ENCODE measurements at regions of chr13 and their contacts with region 1.

Region 1: DNA sequence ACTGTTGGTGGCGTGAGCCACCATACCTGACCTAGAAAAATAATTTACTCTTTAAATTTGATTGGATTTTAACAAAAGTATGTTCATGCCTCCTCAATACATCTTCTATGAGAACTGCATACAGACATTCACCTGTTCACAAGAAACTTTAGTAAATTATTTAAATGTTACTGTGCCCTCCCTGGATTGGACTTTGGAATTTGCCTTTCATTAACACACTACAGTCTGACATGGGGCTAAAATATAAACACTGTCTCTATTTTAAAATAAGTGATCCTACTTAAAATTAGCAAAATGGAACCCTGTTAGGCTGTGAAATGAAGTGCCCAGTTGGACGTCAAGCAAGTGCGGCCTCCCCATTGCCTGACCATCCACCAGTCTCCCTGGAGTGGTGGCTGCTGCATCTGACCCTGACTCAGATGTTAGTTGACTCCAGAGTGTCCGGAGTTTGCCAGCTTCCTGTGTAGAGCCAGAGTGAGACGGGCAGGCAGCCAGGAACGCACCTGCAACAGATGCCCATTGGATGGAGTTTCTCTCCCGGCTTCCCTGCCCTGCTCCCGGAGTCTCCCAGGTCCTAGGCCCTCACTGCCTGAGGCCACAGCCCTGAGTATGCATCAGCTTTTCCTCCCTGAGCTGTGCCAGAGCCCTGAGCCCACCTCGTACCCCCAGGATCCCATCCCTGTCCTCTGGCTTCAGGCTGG is 45.9 kb upstream of the ATP11A start:
- DNase-seq: no peak
- H3K4me3 ChIP-seq: no peak overlapping the region
- H3K27ac ChIP-seq: no peak overlapping the region
- H3K4me1 ChIP-seq: no peaks in the 10 kb centered on the region
- H3K27me3 ChIP-seq: no peaks in the 10 kb centered on the region
- CTCF ChIP-seq: no peak
- EP300 ChIP-seq: no peak
- POLR2A ChIP-seq: no peak

Region 2: GRCh38 chr13:112616586-112617362 is 27.1 kb before region 1 on chr13:
- intact Hi-C with region 1: no loop called
- DNase-seq: no peak
- H3K4me3 ChIP-seq: no peak overlapping the region
- H3K27ac ChIP-seq: no peak overlapping the region
- H3K4me1 ChIP-seq: peaks cover 2% of the 10 kb centered on the region
- H3K27me3 ChIP-seq: no peaks in the 10 kb centered on the region
- CTCF ChIP-seq: no peak
- EP300 ChIP-seq: no peak
- POLR2A ChIP-seq: no peak

Region 3: DNA sequence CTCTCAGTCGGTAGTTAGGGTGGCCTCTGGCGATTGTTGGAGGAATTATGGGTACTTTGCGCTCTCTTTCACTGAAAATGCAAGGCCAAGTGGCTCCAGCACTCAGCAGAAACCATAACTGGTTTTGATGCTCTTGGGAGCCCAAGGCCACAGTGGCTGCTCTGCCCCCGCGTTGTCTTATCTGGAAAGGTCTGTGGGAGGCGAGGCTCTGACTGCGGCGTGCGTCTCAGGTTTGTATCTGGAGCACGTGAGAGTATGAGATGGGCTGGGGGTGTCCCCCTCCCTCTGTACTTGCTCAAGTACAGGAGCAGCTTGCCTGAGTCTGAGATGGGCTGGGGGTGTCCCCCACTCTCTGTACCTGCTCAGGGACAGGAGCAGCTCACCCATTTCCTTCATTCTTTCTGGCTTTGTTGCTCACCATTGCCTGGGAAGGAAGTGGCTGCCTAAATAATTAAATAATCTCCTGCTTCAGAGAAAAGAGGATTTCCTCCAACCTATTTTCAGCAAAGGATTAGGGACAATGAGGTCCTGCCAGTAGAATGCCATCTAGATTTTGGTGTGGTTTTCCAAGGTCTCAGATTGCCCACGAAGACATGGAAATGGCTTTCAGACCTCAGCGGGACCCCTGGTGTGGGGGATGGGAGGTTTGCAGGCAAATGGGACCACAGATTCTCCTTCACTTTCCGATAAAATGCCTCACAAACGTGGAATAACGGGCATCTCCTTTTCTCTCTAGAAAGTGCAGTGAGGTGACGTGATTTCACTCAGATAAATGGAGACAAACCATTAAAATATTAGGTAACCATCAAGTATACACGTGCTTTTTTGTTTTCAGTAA is 60.6 kb after region 1 on chr13:
- intact Hi-C with region 1: loop called in 1 of 4 experiments (anchors 2 kb)
- DNase-seq: peak in 3 of 5 donors; percentile 25 to 66 (median 55)
- H3K4me3 ChIP-seq: no peak overlapping the region
- H3K27ac ChIP-seq: no peak overlapping the region
- H3K4me1 ChIP-seq: peaks cover 6% of the 10 kb centered on the region
- H3K27me3 ChIP-seq: no peaks in the 10 kb centered on the region
- CTCF ChIP-seq: no peak
- EP300 ChIP-seq: no peak
- POLR2A ChIP-seq: no peak

Region 4: DNA sequence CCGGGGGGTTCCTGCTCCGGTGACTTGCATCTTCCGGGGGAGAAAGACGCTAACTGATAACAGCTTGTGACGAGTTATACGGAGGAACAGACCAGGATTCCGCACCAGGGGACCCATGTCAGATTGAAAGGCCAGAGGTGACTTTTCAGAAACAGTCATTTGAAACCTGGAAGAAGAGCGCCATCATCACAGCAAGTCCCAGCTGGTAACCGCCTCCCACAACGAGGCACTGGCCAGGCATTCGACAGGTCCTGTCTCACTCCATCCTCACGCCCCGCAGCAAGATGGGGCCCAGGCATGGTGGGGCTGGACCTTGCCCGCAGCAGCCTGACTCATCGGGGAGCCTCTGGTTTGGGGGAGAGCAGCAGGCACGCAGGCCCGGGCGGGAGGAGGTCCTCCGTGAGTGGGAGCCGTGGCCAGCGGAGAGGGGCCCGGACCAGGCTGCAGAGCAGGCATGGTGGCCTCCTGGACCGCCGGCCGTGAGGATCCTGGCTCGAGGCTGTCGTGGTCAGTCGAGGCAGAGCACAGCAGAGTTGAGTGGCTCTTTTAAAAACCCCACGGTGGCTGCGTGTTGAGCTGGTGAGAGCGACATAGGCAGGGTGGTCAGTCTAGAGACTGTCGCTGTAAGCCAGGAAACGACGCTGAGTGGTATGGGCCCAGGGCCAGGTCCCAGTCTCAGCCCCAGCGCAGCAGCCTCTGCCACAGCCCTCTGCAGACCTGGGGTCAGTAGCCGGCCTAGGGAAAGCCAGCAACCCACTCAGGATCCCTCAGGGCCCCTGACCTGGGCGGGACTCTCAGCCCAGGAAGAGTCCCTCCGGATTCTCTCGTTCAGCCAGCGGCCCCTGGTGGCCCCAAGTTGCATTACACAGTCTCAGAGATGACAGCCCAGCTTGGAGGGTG is 230.2 kb after region 1 on chr13:
- intact Hi-C with region 1: loop called in 3 of 4 experiments (anchors 2 to 10 kb)
- DNase-seq: peak; percentile 69 to 88 (median 82)
- H3K4me3 ChIP-seq: no peak overlapping the region
- H3K27ac ChIP-seq: peak overlapping the region in 1 of 2 donors; percentile 24
- H3K4me1 ChIP-seq: no peaks in the 10 kb centered on the region
- H3K27me3 ChIP-seq: no peaks in the 10 kb centered on the region
- CTCF ChIP-seq: peak; percentile 70 to 90 (median 89)
- EP300 ChIP-seq: no peak
- POLR2A ChIP-seq: no peak

Region 5: GRCh38 chr13:112880721-112881540 is 237.0 kb after region 1 on chr13:
- intact Hi-C with region 1: loop called in 3 of 4 experiments (anchors 5 to 10 kb)
- DNase-seq: no peak
- H3K4me3 ChIP-seq: no peak overlapping the region
- H3K27ac ChIP-seq: no peak overlapping the region
- H3K4me1 ChIP-seq: peaks cover 2% of the 10 kb centered on the region
- H3K27me3 ChIP-seq: no peaks in the 10 kb centered on the region
- CTCF ChIP-seq: no peak
- EP300 ChIP-seq: no peak
- POLR2A ChIP-seq: no peak

Measured in ovary (tissue), 10 donors.